Panc1 (cell line): ENCODE measurements at regions of chr6 and their contacts with region 1.

Region 1: DNA sequence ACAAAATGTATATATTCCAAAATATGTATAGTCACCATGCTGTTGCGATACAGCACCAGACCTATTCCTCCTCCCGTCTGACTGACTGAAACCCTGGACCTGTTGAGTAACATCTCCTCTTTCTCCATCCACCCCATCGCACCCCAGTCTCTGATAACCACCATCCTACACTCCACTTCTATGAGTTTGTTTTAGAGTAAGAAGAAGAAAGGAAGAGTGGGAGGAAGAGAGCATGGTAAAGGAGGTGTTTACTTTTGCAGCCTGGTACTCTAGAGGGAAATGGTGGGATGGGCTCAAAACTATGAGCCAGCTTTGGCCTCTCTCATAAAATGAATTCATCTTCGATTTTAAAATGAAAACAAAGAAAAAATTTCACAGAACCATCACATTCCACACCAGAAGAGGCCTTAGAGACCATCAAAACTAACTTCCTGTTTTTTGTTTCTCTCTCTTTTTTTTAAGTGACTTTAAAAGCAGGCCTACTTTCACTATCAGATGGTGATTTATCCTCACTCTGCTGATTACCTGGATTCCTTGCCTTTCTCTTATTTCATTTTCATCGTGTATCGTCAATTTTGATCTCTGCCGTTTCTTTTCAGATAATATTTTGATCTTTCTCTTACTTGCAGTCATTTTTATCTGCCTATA is 16.8 kb upstream of the FUCA2 start:
- DNase-seq: no peak
- ATAC-seq: no peak; the same call in 1 of the 2 replicates
- H3K4me3 ChIP-seq: no peak overlapping the region
- H3K27ac ChIP-seq: no peak overlapping the region
- H3K4me1 ChIP-seq: no peaks in the 10 kb centered on the region
- H3K27me3 ChIP-seq: no peaks in the 10 kb centered on the region; the same call in 1 of the 2 replicates
- CTCF ChIP-seq: no peak

Region 2: DNA sequence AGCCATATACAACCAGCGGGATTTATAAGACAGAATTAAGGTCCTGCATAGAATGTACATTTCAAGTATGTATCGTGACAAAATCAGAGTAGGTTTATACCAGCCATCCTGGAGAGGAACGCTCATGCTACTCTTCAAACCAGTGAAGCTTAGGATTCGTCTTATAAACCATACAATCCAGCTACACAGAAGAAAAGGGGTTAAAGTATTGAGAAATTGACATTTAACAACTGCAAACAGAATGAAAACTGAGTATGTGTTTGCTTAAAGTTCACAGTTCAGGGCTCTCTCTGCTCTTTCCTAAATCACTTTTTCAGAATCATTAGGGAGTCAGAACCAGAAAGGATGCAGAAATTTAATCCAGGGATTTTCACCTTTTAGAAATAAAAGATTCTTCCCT is 95.7 kb before region 1 on chr6:
- CTCF ChIA-PET with region 1: no interaction called
- POLR2A ChIA-PET with region 1: interaction called, 13 read pairs
- in situ Hi-C with region 1: no loop called
- intact Hi-C with region 1: no loop called
- DNase-seq: no peak
- ATAC-seq: no peak
- H3K4me3 ChIP-seq: no peak overlapping the region
- H3K27ac ChIP-seq: no peak overlapping the region
- H3K4me1 ChIP-seq: no peaks in the 10 kb centered on the region
- H3K27me3 ChIP-seq: no peaks in the 10 kb centered on the region
- CTCF ChIP-seq: no peak